Head of caudate nucleus (tissue), 42 donors: ENCODE measurements at regions of chr22 and their contacts with region 1.

Region 1: DNA sequence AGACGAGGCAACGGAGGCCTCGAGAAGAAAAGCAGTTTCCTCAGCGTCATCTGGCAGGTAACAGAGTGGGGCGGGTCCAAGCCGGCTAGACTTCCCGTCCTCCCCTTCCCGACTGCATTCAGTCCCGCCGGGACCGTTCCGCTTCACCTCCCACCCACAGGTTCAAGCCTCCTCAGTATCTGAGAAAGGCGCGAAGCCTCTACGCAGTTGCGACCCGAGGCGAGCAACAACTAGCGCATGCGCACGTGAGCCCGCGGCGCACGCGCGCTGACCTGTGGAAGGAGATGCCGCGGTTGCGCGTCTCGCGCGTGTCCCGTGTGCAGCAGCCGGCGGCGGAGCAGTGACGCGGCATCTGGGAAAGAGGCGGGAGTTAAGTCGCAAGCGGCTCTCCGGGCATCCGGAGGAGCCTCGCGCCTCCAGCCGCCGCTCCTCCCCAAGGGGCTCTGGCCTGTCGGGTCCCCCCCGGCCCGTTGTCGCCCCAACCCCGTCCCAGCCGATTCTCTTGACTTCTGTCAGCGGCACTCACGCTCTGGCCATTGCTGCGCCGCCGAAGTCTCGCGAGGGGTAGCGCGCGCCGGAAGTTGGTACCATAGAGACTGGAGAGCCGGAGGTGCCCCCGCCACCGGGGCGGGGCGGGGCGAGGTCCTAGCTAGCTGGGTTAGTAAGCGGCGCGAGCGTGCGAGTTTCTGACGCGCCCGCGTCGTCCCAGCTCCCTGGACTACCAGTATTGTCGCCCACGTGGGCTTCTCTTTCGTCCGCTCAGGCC is at the start of gene THAP7:
- DNase-seq: peak; percentile 93 to 99 (median 97)

Region 2: GRCh38 chr22:20981787-20982562 is 19.8 kb before region 1 on chr22 and contains the start of gene LZTR1:
- intact Hi-C with region 1: loop called (anchors 1 kb)
- DNase-seq: peak; percentile 68 to 95 (median 91)

Region 3: DNA sequence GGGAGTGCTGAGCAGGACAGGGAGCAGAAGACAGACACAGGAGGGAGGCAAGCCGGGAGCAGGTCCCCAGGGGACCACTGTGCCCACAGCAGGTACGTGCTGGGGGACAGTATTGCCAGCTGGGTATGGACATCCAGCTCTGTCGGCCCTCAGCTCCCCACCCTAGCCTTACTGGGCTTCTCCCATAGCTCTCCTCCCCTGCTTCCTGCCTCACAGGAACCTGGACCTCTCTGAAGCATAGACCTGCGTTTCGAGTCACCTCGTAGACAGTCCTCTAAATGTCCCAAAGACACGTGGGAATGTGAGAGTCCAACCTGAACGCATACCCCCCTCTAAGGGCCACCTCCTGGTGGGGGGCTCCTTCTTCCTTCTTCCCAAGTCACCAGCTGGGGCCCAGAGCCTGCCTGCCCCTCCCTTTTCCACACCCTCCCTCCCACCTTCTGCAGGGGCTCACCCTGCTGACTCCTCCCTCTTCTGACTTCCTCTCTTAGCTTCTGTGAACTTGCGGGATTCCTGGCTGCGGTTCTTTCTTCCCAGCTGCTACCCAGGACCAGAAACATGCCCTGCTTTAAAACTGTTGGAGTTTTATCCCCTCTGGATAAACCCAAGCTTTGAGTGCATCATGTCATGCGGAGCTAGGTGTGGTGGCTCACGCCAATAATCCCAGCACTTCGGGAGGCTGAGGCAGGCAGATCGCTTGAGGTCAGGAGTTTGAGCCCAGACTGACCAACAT is 54.0 kb after region 1 on chr22:
- intact Hi-C with region 1: no loop called
- DNase-seq: no peak